Naive thymus-derived CD4-positive, alpha-beta T cell (primary cell): ENCODE measurements at regions of chr4 and their contacts with region 1.

Region 1: DNA sequence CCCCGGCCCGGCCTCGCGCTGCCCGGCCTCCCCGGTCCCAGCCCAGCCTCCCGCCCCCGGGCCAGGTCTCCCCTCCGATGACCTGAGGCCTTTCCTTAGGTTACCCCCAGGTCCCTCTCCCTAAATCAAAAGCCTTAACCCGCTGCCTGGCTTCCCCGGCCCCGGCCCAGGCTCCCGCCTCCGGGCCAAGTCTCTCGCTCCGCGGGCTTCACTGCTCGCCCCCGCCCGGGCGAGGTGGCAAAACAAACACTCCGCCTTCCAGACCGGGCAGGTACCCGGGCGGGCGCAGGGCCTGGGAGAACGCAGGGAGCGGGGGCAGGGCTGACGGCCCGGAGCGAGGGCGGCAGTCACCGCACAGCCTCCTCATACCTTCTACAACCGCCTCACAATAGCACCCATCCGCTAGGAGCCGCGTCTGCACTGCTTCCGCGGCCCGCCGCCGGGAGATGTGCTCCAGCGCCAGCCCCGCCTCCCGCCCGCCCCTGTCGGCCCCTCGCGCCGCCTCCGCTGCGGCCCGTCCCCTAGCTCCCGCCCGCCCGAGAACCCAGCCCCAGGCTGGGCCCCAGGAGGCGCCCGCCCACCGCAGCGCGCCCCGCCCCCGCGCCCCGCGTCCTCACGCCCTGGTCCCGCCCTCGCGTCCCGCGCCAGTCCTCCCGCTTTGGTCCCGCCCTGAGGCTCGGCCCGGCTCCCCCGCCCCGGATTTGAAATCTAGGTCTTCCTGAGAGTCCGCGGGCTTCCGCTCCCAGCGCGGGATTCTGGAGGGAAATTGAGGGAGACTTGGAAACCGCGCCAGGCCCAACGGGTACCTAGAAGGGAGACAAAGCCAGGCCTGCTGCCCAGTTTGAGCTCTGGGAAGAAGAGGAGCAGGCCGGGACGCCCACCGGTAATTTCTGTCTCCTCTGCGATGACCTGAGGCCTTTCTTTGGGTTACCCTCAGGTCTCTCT is at the starts of genes CASP3 and PRIMPOL:
- DNase-seq: peak; percentile 90 to 98 (median 93)
- ATAC-seq: peak; percentile 96
- H3K4me3 ChIP-seq: peak within 1 kb of the TSS; percentile 92
- H3K4me3 Mint-ChIP-seq: peak within 1 kb of the TSS; percentile 92 to 99 (median 97)
- H3K27ac ChIP-seq: peak within 1 kb of the TSS; percentile 91
- H3K27ac Mint-ChIP-seq: peak within 1 kb of the TSS; percentile 91 to 97 (median 95)
- H3K4me1 ChIP-seq: peaks cover 26 to 37% of the 10 kb centered on the region in 2 donors
- H3K4me1 Mint-ChIP-seq: peaks cover 47 to 69% (median 54%) of the 10 kb centered on the region in 7 donors
- H3K27me3 ChIP-seq: no peaks in the 10 kb centered on the region
- H3K27me3 Mint-ChIP-seq: no peaks in the 10 kb centered on the region
- total RNA-seq, gene CASP3: 12.4 to 73.4 (median 17.2) TPM
- total RNA-seq, gene PRIMPOL: 12.1 to 19.3 (median 16.7) TPM

Region 2: DNA sequence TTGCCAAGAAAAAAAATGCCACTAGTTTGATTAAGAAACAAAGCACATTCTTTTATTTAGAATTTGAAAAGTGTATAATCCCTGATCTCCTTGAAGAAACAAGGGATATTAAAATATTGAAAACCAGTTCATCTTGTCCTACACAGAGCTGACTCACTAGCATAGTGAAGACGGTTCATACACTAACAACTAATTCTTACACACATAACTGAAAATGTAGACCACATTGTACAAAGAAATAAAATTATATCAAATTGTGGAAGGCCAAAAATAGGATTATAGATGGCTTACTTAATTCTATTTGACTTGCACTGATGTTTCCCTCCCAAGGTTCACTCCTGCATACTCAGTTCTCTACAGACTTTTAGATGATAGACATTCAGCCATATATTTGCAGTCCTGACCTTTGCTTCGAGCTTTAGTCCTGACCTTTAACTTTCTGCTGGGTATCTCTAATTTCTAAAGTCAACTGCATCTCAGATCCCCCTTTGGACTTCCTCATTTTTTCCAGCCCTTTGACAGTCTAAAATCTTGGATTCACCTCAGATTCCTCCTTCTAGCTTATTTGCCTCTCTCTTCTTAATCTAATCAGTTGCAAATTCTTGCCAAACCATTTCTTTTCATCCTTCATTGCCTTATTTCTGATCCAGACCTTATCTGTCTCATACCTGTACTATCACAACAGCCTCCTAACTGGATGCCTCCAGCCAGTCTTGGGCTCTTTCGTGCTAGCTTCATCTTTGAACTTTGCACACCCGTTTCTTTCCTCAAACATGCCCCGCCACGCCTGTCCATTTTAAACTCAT is 1554.7 kb before region 1 on chr4:
- CTCF ChIA-PET with region 1: no interaction called
- POLR2A ChIA-PET with region 1: no interaction called
- intact Hi-C with region 1: no loop called
- DNase-seq: no peak
- ATAC-seq: no peak
- H3K4me3 ChIP-seq: no peak overlapping the region
- H3K4me3 Mint-ChIP-seq: no peak overlapping the region
- H3K27ac ChIP-seq: no peak overlapping the region
- H3K27ac Mint-ChIP-seq: peak overlapping the region in 5 of 9 donors; percentile 2 to 25 (median 21)
- H3K4me1 ChIP-seq: no peaks in the 10 kb centered on the region
- H3K4me1 Mint-ChIP-seq: peaks cover 3 to 27% (median 23%) of the 10 kb centered on the region in 7 donors
- H3K27me3 ChIP-seq: no peaks in the 10 kb centered on the region
- H3K27me3 Mint-ChIP-seq: peaks cover 0 to 41% (median 0%) of the 10 kb centered on the region in 5 donors

Region 3: DNA sequence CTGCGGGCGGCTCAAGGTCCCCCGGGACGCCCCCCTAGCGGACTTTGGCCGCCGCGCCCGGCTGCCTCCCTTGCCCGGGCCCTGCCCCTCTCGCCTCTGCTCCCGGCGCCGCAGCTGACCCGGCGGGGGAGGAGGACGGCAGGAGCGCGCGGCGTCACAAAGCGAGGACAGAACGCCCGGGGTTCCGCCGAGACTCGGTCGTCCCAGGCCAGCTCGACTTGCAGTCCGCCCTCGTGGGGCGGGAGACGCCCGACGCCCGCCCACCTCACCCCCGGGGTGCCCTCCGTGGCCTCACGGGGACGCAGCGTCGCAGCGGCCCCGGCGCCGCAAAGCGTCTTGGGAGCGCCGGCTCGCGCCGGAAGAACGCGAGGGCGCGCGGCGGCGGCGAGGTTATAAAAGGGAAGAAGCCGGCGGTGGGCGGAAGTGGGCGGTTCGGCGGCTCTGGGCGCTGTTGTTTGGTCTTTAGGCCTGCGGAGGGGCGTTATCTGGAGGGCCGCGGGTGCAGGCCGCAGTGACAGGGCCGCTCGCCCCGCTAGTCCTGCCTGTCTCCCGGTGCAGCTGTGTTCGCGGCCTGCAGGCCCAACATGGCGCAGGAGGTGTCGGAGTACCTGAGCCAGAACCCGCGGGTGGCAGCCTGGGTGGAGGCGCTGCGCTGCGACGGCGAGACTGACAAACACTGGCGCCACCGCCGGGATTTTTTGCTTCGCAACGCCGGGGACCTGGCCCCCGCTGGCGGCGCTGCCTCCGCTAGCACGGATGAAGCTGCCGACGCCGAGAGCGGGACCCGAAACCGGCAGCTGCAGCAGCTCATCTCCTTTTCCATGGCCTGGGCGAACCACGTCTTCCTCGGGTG is 1204.9 kb before region 1 on chr4 and contains the start of gene CDKN2AIP:
- CTCF ChIA-PET with region 1: no interaction called
- POLR2A ChIA-PET with region 1: interaction called, 5 read pairs
- intact Hi-C with region 1: loop called (anchors 1 to 5 kb)
- DNase-seq: peak; percentile 92 to 97 (median 95)
- ATAC-seq: peak; percentile 93
- H3K4me3 ChIP-seq: peak within 1 kb of the TSS; percentile 81
- H3K4me3 Mint-ChIP-seq: peak within 1 kb of the TSS; percentile 94 to 99 (median 97)
- H3K27ac ChIP-seq: peak within 1 kb of the TSS; percentile 96
- H3K27ac Mint-ChIP-seq: peak within 1 kb of the TSS; percentile 97 to 98 (median 98)
- H3K4me1 ChIP-seq: peaks cover 30 to 33% of the 10 kb centered on the region in 2 donors
- H3K4me1 Mint-ChIP-seq: peaks cover 35 to 66% (median 51%) of the 10 kb centered on the region in 7 donors
- H3K27me3 ChIP-seq: no peaks in the 10 kb centered on the region
- H3K27me3 Mint-ChIP-seq: peaks cover 0 to 5% (median 0%) of the 10 kb centered on the region in 5 donors
- total RNA-seq, gene CDKN2AIP: 24.9 to 58.2 (median 44.4) TPM

Region 4: DNA sequence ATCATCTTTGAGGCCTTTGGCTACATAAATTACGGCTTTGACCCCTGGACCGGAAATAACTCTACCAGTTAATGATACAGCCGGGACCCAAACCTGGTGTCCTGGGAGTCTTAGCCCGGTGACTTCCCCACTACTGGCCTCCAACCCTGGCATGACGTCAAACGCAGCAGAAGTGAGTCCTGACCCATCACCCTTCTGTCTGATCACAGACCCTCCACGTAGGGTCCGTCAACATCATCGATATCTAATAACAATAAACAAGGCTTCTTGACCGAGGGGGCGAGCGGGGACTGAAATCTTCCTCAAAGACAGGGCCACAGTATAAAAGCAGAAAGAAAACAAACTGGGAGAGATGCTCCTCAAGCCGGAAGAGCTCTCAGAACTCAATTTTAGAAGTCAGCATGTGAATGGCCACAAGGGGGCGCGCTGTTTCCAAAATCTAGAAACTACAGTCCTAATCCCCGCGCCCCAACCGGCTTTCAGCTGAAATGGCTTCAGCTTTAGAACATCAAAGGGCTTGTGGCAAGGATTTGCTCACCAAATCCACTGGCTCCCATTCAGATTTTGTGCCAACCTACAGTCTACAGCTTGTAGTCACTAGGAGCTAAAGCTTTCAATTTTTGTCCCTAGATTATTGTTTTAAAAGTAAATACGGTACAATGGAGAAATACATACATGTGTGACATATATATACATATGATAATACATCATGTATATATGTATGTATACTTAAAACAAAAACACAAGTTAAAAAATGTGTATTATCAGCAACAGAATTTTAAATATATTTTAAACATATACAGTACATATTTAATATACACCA is 385.2 kb before region 1 on chr4:
- CTCF ChIA-PET with region 1: interaction called, 12 read pairs
- POLR2A ChIA-PET with region 1: interaction called, 9 read pairs
- intact Hi-C with region 1: loop called (anchors 1 kb)
- DNase-seq: peak; percentile 80 to 90 (median 87)
- ATAC-seq: peak; percentile 86
- H3K4me3 ChIP-seq: no peak overlapping the region
- H3K4me3 Mint-ChIP-seq: peak overlapping the region in 1 of 10 donors; percentile 17
- H3K27ac ChIP-seq: no peak overlapping the region
- H3K27ac Mint-ChIP-seq: peak overlapping the region in 6 of 9 donors; percentile 5 to 72 (median 63)
- H3K4me1 ChIP-seq: peaks cover 6 to 14% of the 10 kb centered on the region in 2 donors
- H3K4me1 Mint-ChIP-seq: peaks cover 5 to 54% (median 28%) of the 10 kb centered on the region in 7 donors
- H3K27me3 ChIP-seq: no peaks in the 10 kb centered on the region
- H3K27me3 Mint-ChIP-seq: peaks cover 0 to 2% (median 0%) of the 10 kb centered on the region in 5 donors

Region 5: DNA sequence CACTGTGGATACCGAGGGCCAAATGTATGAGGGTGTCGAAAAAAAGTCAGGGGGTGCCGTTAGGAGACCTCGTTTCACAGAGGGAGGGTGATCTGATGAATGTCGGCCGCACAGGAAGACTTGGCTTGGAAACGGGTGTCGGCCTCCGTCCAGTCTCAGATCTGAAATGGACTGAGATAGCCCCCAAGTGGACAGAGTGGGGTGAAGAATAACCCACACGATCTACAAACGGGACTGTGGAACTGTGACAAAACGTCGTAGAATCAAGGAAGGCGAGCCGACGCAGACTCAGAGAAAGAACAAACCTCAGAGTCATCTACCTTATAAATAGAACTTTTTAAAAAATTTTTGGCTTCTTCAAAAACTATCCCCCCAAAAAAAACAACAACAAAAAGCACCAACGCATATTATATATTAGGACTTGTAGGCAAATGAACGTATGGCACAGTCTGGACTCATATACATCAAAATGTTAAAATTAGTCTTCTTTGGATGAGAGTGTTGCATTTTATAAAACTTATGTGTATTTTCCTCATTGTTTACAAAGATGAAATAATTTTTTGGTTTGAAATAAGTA is 111.2 kb before region 1 on chr4:
- CTCF ChIA-PET with region 1: no interaction called
- POLR2A ChIA-PET with region 1: interaction called, 15 read pairs
- intact Hi-C with region 1: loop called (anchors 1 kb)
- DNase-seq: peak in 8 of 9 donors; percentile 42 to 67 (median 56)
- ATAC-seq: peak; percentile 79
- H3K4me3 ChIP-seq: peak overlapping the region; percentile 86
- H3K4me3 Mint-ChIP-seq: peak overlapping the region; percentile 83 to 99 (median 95)
- H3K27ac ChIP-seq: peak overlapping the region; percentile 97
- H3K27ac Mint-ChIP-seq: peak overlapping the region; percentile 90 to 100 (median 99)
- H3K4me1 ChIP-seq: peaks cover 20 to 22% of the 10 kb centered on the region in 2 donors
- H3K4me1 Mint-ChIP-seq: peaks cover 34 to 51% (median 45%) of the 10 kb centered on the region in 7 donors
- H3K27me3 ChIP-seq: no peaks in the 10 kb centered on the region
- H3K27me3 Mint-ChIP-seq: no peaks in the 10 kb centered on the region

Region 6: DNA sequence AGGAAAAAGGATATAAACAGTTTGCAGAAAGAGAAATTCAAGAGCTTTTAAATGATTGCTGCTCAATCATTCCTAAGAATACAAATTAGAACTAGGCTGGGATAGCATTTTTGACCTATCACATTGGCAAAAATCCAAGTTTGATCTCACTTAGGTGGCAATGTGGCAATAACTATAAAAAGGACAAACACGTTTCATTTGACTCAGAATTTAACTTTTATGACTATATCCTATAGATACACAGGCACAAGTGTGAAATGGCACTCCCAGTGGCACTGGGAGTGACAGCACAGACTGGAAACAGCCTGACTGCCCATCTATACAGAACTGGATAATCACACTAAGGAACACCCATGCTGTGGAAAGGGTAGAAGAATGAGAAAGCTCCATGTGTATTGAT is 73.5 kb after region 1 on chr4:
- CTCF ChIA-PET with region 1: no interaction called
- POLR2A ChIA-PET with region 1: no interaction called
- intact Hi-C with region 1: no loop called
- DNase-seq: no peak
- ATAC-seq: no peak
- H3K4me3 ChIP-seq: no peak overlapping the region
- H3K4me3 Mint-ChIP-seq: no peak overlapping the region
- H3K27ac ChIP-seq: no peak overlapping the region
- H3K27ac Mint-ChIP-seq: peak overlapping the region in 1 of 9 donors; percentile 24
- H3K4me1 ChIP-seq: no peaks in the 10 kb centered on the region
- H3K4me1 Mint-ChIP-seq: peaks cover 0 to 62% (median 0%) of the 10 kb centered on the region in 7 donors
- H3K27me3 ChIP-seq: no peaks in the 10 kb centered on the region
- H3K27me3 Mint-ChIP-seq: no peaks in the 10 kb centered on the region

Region 7: GRCh38 chr4:184733654-184734524 is 84.6 kb after region 1 on chr4 and contains the start of gene CENPU:
- CTCF ChIA-PET with region 1: no interaction called
- POLR2A ChIA-PET with region 1: interaction called, 5 read pairs
- intact Hi-C with region 1: loop called (anchors 1 kb)
- DNase-seq: peak; percentile 89 to 98 (median 94)
- ATAC-seq: peak; percentile 98
- H3K4me3 ChIP-seq: peak within 1 kb of the TSS; percentile 82
- H3K4me3 Mint-ChIP-seq: peak within 1 kb of the TSS; percentile 84 to 98 (median 89)
- H3K27ac ChIP-seq: peak within 1 kb of the TSS; percentile 66
- H3K27ac Mint-ChIP-seq: peak within 1 kb of the TSS; percentile 60 to 96 (median 89)
- H3K4me1 ChIP-seq: peaks cover 7 to 11% of the 10 kb centered on the region in 2 donors
- H3K4me1 Mint-ChIP-seq: peaks cover 4 to 50% (median 20%) of the 10 kb centered on the region in 7 donors
- H3K27me3 ChIP-seq: no peaks in the 10 kb centered on the region
- H3K27me3 Mint-ChIP-seq: no peaks in the 10 kb centered on the region
- total RNA-seq, gene CENPU: 1.1 to 43.8 (median 3.1) TPM

Region 8: GRCh38 chr4:184907216-184907615 is 257.9 kb after region 1 on chr4:
- CTCF ChIA-PET with region 1: no interaction called
- POLR2A ChIA-PET with region 1: no interaction called
- intact Hi-C with region 1: loop called in 1 of 2 experiments (anchors 5 kb)
- DNase-seq: peak in 3 of 9 donors; percentile 2 to 18 (median 4)
- ATAC-seq: no peak
- H3K4me3 ChIP-seq: no peak overlapping the region
- H3K4me3 Mint-ChIP-seq: no peak overlapping the region
- H3K27ac ChIP-seq: no peak overlapping the region
- H3K27ac Mint-ChIP-seq: peak overlapping the region in 1 of 9 donors; percentile 10
- H3K4me1 ChIP-seq: no peaks in the 10 kb centered on the region
- H3K4me1 Mint-ChIP-seq: peaks cover 0 to 11% (median 7%) of the 10 kb centered on the region in 7 donors
- H3K27me3 ChIP-seq: no peaks in the 10 kb centered on the region
- H3K27me3 Mint-ChIP-seq: peaks cover 0 to 6% (median 2%) of the 10 kb centered on the region in 5 donors

Region 9: GRCh38 chr4:185395956-185396723 is 746.8 kb after region 1 on chr4:
- CTCF ChIA-PET with region 1: no interaction called
- POLR2A ChIA-PET with region 1: no interaction called
- intact Hi-C with region 1: loop called (anchors 1 to 2 kb)
- DNase-seq: peak; percentile 93 to 100 (median 97)
- ATAC-seq: peak; percentile 97
- H3K4me3 ChIP-seq: peak overlapping the region; percentile 69
- H3K4me3 Mint-ChIP-seq: peak overlapping the region; percentile 82 to 100 (median 97)
- H3K27ac ChIP-seq: peak overlapping the region; percentile 97
- H3K27ac Mint-ChIP-seq: peak overlapping the region; percentile 90 to 100 (median 99)
- H3K4me1 ChIP-seq: peaks cover 12 to 15% of the 10 kb centered on the region in 2 donors
- H3K4me1 Mint-ChIP-seq: peaks cover 14 to 57% (median 27%) of the 10 kb centered on the region in 7 donors
- H3K27me3 ChIP-seq: no peaks in the 10 kb centered on the region
- H3K27me3 Mint-ChIP-seq: no peaks in the 10 kb centered on the region